ENCODE measurements at regions of chr9 and their contacts with region 1.

Region 1: GRCh38 chr9:33737811-33738606 is 57.4 kb upstream of the PRSS3 start:
- DNase-seq: peak; percentile 56
- ATAC-seq: peak; percentile 60
- H3K4me3 Mint-ChIP-seq: no peak overlapping the region
- H3K27ac Mint-ChIP-seq: no peak overlapping the region
- H3K4me1 Mint-ChIP-seq: no peaks in the 10 kb centered on the region
- H3K27me3 Mint-ChIP-seq: peaks cover 30% of the 10 kb centered on the region

Region 2: GRCh38 chr9:33750307-33750838 is 12.4 kb after region 1 on chr9:
- CTCF ChIA-PET with region 1: interaction called, 27 read pairs
- POLR2A ChIA-PET with region 1: no interaction called
- DNase-seq: no peak
- ATAC-seq: no peak
- H3K4me3 Mint-ChIP-seq: no peak overlapping the region
- H3K27ac Mint-ChIP-seq: no peak overlapping the region
- H3K4me1 Mint-ChIP-seq: peaks cover 45% of the 10 kb centered on the region
- H3K27me3 Mint-ChIP-seq: peaks cover 74% of the 10 kb centered on the region

Region 3: GRCh38 chr9:33976414-33976813 is 238.4 kb after region 1 on chr9:
- CTCF ChIA-PET with region 1: no interaction called
- POLR2A ChIA-PET with region 1: no interaction called
- DNase-seq: no peak
- ATAC-seq: no peak
- H3K4me3 Mint-ChIP-seq: no peak overlapping the region
- H3K27ac Mint-ChIP-seq: peak overlapping the region; percentile 30
- H3K4me1 Mint-ChIP-seq: no peaks in the 10 kb centered on the region
- H3K27me3 Mint-ChIP-seq: no peaks in the 10 kb centered on the region

Measured in activated CD8-positive, alpha-beta T cell treated with anti-CD3 and anti-CD28 coated beads, Interleukin-2, amount 10 ng/mL, durations not matched to agents 7 days and 5 days (primary cell).